ENCODE measurements at regions of chr16 and their contacts with region 1.

Region 1: DNA sequence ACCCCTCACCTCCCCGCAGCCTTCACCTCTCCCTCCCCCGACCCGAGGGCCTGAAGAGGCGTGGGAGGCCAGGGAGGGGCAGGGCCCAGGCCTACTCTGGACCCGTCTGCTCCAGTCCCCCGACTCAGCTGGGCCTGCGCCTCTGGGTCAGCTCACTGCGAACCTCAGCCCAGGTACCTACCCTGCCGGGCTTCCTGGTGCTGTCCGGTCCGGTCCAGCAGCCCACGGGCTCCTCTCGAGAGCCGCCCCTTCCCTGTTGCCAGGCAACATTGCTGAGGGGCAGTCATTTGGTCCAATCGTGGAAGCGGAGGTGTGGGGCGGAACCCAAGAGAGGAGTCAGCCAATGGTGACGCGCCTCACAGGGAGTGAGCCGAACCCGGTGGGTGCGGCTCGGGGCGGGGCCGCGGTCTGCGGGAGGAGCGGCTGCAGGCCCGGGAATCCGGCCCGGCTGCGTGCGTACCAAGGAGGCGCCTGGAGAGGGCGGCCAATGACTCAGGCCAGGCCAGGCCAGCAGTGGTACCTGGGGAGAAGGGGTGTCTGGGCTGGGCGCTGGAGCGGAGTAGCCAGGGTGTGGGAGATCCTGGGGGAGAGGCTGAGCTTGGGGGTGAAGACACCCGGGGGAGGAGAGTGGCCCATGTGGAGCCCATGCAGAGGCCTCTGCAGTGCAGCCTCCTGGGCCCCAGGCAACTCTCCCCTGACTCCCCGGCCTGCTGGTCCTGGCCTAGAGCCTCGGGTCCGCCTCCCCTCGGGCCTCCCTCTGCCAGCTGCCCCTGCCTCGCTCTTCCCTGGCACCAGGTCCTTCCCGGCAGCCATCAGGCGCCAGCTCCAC is at the start of gene MEAK7:
- DNase-seq: peak; percentile 98
- H3K4me3 Mint-ChIP-seq: peak within 1 kb of the TSS; percentile 86
- H3K27ac Mint-ChIP-seq: peak within 1 kb of the TSS; percentile 98
- H3K4me1 Mint-ChIP-seq: peaks cover 64% of the 10 kb centered on the region
- H3K27me3 Mint-ChIP-seq: peaks cover 2% of the 10 kb centered on the region
- total RNA-seq, gene MEAK7: 27.7 to 33.4 TPM

Region 2: GRCh38 chr16:84277237-84277823 is 227.3 kb before region 1 on chr16:
- CTCF ChIA-PET with region 1: interaction called, 22 read pairs
- POLR2A ChIA-PET with region 1: no interaction called
- DNase-seq: peak; percentile 73
- H3K4me3 Mint-ChIP-seq: no peak overlapping the region
- H3K27ac Mint-ChIP-seq: no peak overlapping the region
- H3K4me1 Mint-ChIP-seq: no peaks in the 10 kb centered on the region
- H3K27me3 Mint-ChIP-seq: peaks cover 7% of the 10 kb centered on the region

Region 3: DNA sequence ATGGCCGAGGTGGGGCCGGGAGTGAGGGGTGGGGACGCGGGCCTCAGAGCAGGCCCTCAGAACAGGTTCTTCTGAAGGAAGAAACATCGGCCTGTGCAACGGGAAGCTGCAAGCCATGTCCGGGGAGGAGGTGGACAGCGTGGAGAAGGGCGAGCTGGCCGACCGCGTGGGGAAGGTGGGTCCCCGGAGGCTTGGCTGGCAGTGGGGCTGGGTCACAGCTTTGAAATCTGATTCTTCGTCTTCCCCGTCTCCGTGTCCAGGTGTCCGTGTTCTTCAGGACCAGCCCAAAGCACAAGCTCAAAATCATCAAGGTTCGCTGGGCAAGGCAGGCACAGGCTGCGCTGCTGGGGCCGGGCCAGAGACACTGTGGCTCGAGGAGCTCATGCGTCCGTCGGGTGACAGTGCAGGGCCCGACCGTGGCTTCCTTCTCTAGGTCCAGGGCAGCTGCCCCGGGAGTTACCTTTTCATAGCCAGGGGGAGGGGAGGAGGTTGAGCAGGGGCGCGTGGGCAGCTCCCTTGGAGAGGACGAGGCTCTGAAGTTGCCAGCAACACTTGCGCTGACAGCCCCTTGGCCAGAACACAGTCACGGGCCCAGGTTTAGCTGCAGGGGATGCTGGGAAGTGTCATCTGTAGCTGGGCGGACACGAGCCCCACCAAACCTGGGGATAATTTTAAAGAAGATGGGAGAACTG is 51.4 kb before region 1 on chr16:
- CTCF ChIA-PET with region 1: no interaction called
- POLR2A ChIA-PET with region 1: no interaction called
- DNase-seq: no peak
- H3K4me3 Mint-ChIP-seq: no peak overlapping the region
- H3K27ac Mint-ChIP-seq: no peak overlapping the region
- H3K4me1 Mint-ChIP-seq: no peaks in the 10 kb centered on the region
- H3K27me3 Mint-ChIP-seq: no peaks in the 10 kb centered on the region

Region 4: GRCh38 chr16:84555418-84556195 is 51.0 kb after region 1 on chr16:
- CTCF ChIA-PET with region 1: interaction called, 21 read pairs
- POLR2A ChIA-PET with region 1: interaction called, 38 read pairs
- DNase-seq: no peak
- H3K4me3 Mint-ChIP-seq: no peak overlapping the region
- H3K27ac Mint-ChIP-seq: peak overlapping the region; percentile 41
- H3K4me1 Mint-ChIP-seq: peaks cover 43% of the 10 kb centered on the region
- H3K27me3 Mint-ChIP-seq: no peaks in the 10 kb centered on the region

Region 5: DNA sequence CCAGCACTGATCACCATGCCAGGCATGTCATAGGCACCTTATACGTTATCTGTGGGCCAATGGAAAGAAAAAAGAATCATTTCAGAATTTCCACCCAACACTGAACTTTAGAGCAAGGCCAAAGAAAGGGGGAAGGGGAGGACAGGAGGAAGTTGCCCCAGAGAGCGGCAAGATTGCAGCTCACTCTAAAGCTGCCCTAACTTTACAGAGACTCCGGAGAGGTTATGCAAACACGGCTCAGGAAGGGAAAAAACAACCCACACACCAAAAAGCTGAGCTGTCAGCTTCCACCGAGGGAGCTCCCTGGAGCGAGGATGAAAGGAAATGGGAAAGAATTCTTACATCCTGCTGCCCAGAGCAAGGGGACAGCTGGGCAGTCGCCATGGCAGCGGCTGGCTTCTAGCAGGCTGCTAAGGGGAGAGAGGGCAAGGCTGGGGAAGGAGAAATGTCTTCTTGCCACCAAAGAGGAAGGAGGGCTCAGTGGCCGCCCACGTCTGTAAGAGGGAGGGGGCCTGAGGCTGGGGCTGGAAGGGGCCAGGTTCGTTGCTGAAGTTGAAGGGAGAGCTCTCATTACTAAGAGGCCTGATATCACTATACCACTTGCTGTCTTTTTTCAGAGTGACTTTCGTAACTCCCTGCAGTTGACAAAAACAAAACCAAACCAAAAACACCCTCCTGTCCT is 95.0 kb after region 1 on chr16:
- CTCF ChIA-PET with region 1: interaction called, 12 read pairs
- POLR2A ChIA-PET with region 1: interaction called, 120 read pairs
- DNase-seq: peak; percentile 59
- H3K4me3 Mint-ChIP-seq: peak overlapping the region; percentile 73
- H3K27ac Mint-ChIP-seq: peak overlapping the region; percentile 96
- H3K4me1 Mint-ChIP-seq: peaks cover 93% of the 10 kb centered on the region
- H3K27me3 Mint-ChIP-seq: no peaks in the 10 kb centered on the region

Region 6: GRCh38 chr16:84617791-84618580 is 113.4 kb after region 1 on chr16 and contains the start of gene COTL1:
- CTCF ChIA-PET with region 1: interaction called, 62 read pairs
- POLR2A ChIA-PET with region 1: interaction called, 20 read pairs
- DNase-seq: peak; percentile 95
- H3K4me3 Mint-ChIP-seq: peak within 1 kb of the TSS; percentile 97
- H3K27ac Mint-ChIP-seq: peak within 1 kb of the TSS; percentile 76
- H3K4me1 Mint-ChIP-seq: peaks cover 57% of the 10 kb centered on the region
- H3K27me3 Mint-ChIP-seq: peaks cover 16% of the 10 kb centered on the region
- total RNA-seq, gene COTL1: 676 to 689 TPM

Region 7: DNA sequence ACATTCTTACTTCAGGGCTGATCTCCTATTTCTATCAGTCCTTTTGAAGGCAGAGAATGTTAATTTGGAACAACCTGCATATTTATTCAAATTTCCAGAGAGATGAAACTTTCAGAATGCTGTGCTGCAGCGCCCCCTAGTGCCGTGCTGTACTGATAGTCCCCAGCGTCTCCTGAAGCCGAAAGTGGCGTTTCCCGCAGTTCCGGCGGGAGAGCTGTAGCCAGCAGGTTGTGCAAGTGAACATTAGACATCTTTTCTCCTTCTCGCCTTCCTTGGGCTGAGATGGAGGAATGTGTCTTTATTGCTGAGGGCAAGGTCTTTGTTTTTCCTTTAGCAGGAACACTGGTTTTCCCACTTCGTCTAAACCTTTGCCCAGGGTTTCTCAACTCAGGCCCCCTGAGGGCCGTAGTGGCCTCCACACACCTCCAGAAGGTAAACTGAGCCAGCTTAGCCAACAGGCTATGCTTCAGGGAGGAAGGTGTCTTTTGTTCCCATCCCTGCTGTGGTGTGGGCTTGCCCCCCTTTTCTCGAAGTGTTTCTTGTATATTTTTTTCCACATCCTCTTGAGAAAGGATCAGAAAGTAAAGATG is 221.5 kb after region 1 on chr16:
- CTCF ChIA-PET with region 1: interaction called, 12 read pairs
- POLR2A ChIA-PET with region 1: no interaction called
- DNase-seq: peak; percentile 84
- H3K4me3 Mint-ChIP-seq: no peak overlapping the region
- H3K27ac Mint-ChIP-seq: no peak overlapping the region
- H3K4me1 Mint-ChIP-seq: peaks cover 62% of the 10 kb centered on the region
- H3K27me3 Mint-ChIP-seq: no peaks in the 10 kb centered on the region